Activated B cell treated with CpG ODN at 0.5 μM for 24 hours (primary cell): ENCODE measurements at regions of chr1 and their contacts with region 1.

Region 1: DNA sequence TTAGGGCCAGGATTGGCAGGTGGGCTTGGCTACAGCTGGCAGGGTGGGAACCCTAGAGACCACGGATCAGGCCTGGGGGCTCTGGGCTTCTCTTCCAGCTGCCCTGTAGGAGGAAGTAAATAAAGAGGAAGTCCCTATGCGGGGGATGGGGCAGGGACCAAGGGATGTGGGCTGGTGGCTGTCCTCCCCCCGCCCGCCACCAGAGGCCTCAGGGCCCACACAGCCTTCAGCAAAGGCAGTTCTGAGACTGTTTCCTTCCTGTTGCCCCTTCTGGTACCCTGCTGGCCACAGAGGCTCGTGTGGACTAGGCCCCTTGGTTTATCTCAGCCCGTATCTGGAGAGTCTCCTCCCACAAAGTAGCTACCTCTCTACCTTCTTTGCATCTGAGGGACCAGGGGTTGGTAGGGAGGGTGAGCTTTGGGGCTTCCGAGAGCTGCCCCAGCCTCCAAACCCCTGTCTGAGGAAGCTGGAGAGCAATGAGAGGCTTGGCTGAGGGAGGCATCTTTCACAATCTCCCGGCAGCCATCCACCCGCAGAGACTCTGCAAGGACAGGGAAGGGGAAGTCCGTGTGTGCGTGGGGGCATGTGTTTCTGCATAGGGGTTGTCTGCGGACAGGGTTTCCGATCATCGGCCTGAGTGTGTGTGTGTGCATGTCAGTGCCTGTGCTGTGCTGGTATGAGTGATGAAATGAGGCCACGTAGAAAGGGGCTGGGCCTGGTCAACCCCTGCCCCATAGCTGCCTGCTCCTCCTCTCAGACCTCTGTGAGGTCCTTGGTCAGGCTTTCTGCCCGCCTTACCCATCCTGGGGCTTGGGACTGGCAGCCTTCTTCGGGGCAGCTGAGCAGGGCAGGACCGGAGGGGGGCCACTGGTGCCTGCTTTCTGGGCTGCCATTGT is 12.5 kb downstream of the RPS6KA1 start:
- DNase-seq: peak; percentile 72
- ATAC-seq: peak; percentile 62
- H3K4me3 Mint-ChIP-seq: peak overlapping the region; percentile 82
- H3K27ac Mint-ChIP-seq: peak overlapping the region; percentile 99
- H3K4me1 Mint-ChIP-seq: peaks cover 93% of the 10 kb centered on the region
- H3K27me3 Mint-ChIP-seq: no peaks in the 10 kb centered on the region
- CTCF ChIP-seq: no peak

Region 2: GRCh38 chr1:26472901-26473845 is 68.9 kb before region 1 on chr1:
- CTCF ChIA-PET with region 1: no interaction called
- POLR2A ChIA-PET with region 1: interaction called, 20 read pairs
- intact Hi-C with region 1: loop called (anchors 2 kb)
- DNase-seq: peak; percentile 95
- ATAC-seq: peak; percentile 78
- H3K4me3 Mint-ChIP-seq: peak overlapping the region; percentile 88
- H3K27ac Mint-ChIP-seq: peak overlapping the region; percentile 84
- H3K4me1 Mint-ChIP-seq: peaks cover 58% of the 10 kb centered on the region
- H3K27me3 Mint-ChIP-seq: no peaks in the 10 kb centered on the region
- CTCF ChIP-seq: no peak

Region 3: GRCh38 chr1:26529655-26530409 is 12.2 kb before region 1 on chr1 and contains the start of gene RPS6KA1:
- CTCF ChIA-PET with region 1: interaction called, 7 read pairs
- POLR2A ChIA-PET with region 1: interaction called, 11 read pairs
- intact Hi-C with region 1: loop called (anchors 1 kb)
- DNase-seq: peak; percentile 72
- ATAC-seq: peak; percentile 95
- H3K4me3 Mint-ChIP-seq: peak within 1 kb of the TSS; percentile 90
- H3K27ac Mint-ChIP-seq: peak within 1 kb of the TSS; percentile 80
- H3K4me1 Mint-ChIP-seq: peaks cover 32% of the 10 kb centered on the region
- H3K27me3 Mint-ChIP-seq: peaks cover 1% of the 10 kb centered on the region
- CTCF ChIP-seq: no peak
- total RNA-seq, gene RPS6KA1: 139 and 150 TPM in 2 replicates

Region 4: DNA sequence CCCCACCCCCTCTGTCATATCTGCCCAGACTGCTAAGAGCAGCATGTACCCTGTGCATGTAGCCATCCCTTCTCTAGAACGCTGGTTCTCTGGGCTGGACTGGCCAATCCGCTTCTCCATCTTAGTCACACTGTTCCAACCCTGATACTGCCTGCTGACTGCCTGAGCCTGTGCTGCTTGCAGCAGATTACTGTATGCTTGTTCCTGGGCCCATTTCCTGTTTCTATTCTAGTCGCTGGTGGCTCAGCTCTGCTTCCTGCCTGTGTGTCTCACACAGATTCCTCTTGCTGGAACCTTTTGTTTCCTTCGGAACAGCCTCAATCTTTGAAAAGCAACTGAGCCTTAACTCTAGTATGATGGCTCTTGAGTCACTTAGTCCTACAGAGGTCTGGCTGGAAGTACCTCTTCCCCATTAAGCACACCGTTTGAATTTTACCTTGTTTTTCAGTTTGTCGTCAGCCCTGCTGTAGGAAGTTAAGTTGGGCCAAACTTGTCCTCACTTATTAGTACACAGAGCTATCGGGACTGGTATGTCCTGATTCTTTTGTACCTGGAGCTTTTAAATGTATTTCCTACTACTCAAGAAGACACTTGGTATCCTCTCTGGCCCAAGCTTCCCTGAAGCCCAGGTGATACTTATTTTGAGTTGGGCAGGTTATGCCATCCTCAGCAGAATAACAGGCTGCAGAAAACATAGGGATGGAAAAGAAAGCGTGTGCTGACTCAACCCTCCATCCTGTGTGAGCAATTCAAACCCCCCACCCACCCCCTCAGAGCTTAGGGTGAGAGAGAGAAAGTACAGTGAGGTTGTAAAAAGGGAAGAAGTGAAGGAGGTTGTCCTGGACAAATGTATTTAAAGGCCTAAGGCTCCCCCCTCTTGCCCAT is 202.3 kb after region 1 on chr1:
- CTCF ChIA-PET with region 1: no interaction called
- POLR2A ChIA-PET with region 1: no interaction called
- intact Hi-C with region 1: loop called (anchors 1 kb)
- DNase-seq: peak; percentile 57
- ATAC-seq: peak; percentile 96
- H3K4me3 Mint-ChIP-seq: peak overlapping the region; percentile 79
- H3K27ac Mint-ChIP-seq: peak overlapping the region; percentile 97
- H3K4me1 Mint-ChIP-seq: peaks cover 91% of the 10 kb centered on the region
- H3K27me3 Mint-ChIP-seq: no peaks in the 10 kb centered on the region
- CTCF ChIP-seq: no peak

Region 5: DNA sequence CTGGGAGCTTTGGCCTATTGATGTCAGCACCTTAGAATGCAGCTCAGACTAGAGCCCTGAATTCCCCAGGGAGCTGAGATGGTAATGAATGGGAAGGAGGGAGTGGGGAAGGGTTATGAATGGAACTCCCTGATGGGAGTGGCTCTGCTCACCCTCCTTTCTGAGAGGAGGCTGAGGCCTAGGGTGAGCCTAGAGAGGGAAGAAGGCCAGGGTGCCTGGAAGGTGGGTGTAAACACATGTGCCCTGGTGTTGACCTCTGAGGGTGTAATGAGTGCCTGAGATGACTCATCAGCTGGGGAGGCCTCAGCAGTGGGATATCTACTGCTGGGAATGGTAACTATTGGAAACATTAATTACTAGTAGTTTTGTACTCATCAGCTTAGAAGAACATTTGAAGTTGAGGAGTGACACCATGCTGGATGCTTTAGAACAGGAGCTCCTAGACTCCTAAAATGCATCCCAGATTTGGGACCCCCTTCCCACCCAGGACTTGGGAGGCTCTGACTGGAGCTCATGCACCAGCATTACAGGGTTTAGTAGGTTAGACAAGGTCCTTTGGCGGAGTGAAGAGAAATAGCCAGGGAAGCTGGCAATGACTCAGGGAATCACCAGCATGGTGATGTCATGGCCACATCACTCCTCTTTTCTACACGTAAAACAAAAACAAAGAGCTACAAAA is 229.7 kb after region 1 on chr1:
- CTCF ChIA-PET with region 1: no interaction called
- POLR2A ChIA-PET with region 1: no interaction called
- intact Hi-C with region 1: no loop called
- DNase-seq: no peak
- ATAC-seq: peak; percentile 68
- H3K4me3 Mint-ChIP-seq: no peak overlapping the region
- H3K27ac Mint-ChIP-seq: peak overlapping the region; percentile 65
- H3K4me1 Mint-ChIP-seq: peaks cover 5% of the 10 kb centered on the region
- H3K27me3 Mint-ChIP-seq: no peaks in the 10 kb centered on the region
- CTCF ChIP-seq: no peak

Region 6: GRCh38 chr1:26820784-26821269 is 278.8 kb after region 1 on chr1:
- CTCF ChIA-PET with region 1: no interaction called
- POLR2A ChIA-PET with region 1: no interaction called
- intact Hi-C with region 1: loop called (anchors 2 kb)
- DNase-seq: no peak
- ATAC-seq: peak; percentile 100
- H3K4me3 Mint-ChIP-seq: peak overlapping the region; percentile 55
- H3K27ac Mint-ChIP-seq: peak overlapping the region; percentile 81
- H3K4me1 Mint-ChIP-seq: peaks cover 28% of the 10 kb centered on the region
- H3K27me3 Mint-ChIP-seq: peaks cover 3% of the 10 kb centered on the region
- CTCF ChIP-seq: no peak

Region 7: DNA sequence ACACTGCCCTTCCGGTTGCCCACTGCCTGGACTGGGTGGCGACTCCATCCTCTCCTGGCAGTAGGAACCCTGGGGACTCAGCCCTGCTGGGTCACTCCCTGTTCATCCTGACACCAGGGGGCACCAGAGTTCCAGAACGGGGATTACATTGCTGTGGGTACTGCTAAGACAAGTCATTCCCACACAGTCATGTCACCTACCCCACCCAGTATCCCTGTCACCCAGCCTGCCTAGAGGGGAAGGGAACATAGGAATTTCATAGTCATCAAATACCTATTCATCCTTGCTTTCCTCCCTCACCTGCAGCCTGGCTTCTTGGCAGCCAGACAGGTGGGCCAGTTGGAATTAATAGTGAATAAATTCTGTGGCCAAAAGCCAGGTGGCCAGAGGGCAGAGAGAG is 311.1 kb after region 1 on chr1:
- CTCF ChIA-PET with region 1: no interaction called
- POLR2A ChIA-PET with region 1: no interaction called
- intact Hi-C with region 1: no loop called
- DNase-seq: peak; percentile 67
- ATAC-seq: peak; percentile 94
- H3K4me3 Mint-ChIP-seq: no peak overlapping the region
- H3K27ac Mint-ChIP-seq: no peak overlapping the region
- H3K4me1 Mint-ChIP-seq: no peaks in the 10 kb centered on the region
- H3K27me3 Mint-ChIP-seq: no peaks in the 10 kb centered on the region
- CTCF ChIP-seq: no peak

Region 8: GRCh38 chr1:27234049-27234882 is 692.2 kb after region 1 on chr1 and contains the start of gene WDTC1:
- CTCF ChIA-PET with region 1: no interaction called
- POLR2A ChIA-PET with region 1: no interaction called
- intact Hi-C with region 1: no loop called
- DNase-seq: peak; percentile 94
- ATAC-seq: peak; percentile 91
- H3K4me3 Mint-ChIP-seq: peak within 1 kb of the TSS; percentile 98
- H3K27ac Mint-ChIP-seq: peak within 1 kb of the TSS; percentile 90
- H3K4me1 Mint-ChIP-seq: peaks cover 30% of the 10 kb centered on the region
- H3K27me3 Mint-ChIP-seq: no peaks in the 10 kb centered on the region
- CTCF ChIP-seq: no peak
- total RNA-seq, gene WDTC1: 62.8 and 65.1 TPM in 2 replicates